Cardiac septum (tissue), 1 donor: ENCODE measurements at regions of chr16 and their contacts with region 1.

Region 1: GRCh38 chr16:54422569-54422978 is 136.0 kb upstream of the IRX3 start:
- DNase-seq: no peak

Region 2: DNA sequence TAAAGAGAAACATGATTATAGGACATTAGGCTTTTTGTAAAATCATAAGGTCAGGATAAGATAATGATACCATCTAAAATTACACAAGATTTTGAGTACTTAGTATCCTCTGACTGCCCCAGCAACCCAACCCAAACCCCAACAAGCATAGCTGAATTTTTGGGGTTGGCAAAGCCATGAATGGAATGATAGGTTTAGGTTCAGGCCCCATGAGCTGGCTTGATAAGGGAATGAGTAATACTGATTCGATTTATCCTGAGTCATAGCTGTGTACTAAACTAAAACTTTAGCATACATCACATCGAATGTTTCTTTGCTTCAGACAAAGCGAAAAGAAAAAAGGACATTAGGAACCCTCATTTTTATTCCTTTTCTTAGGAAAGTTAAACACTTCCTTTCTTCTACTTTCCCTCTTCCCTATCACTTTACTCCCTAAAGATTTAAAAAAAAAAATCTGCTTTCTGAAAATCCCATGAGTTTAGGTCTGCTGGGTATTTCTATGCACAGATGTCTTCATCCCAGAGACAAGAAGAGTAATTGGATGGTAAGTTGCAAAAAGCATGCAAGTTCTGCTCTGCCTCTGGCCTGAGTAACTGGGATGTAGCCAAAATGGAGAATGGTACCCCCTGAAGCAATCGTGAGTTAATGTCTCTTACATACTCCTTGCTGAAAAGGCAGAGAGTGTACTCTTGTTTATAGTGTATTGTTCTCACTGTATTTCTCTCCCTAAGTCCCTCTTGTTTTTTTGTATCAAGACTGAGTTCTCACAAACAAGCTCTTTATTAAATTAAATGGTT is 395.2 kb before region 1 on chr16:
- intact Hi-C with region 1: no loop called
- DNase-seq: no peak

Region 3: GRCh38 chr16:54489225-54490111 is 66.9 kb after region 1 on chr16:
- intact Hi-C with region 1: loop called (anchors 5 kb)
- DNase-seq: no peak

Region 4: GRCh38 chr16:54817446-54817845 is 394.9 kb after region 1 on chr16:
- intact Hi-C with region 1: loop called (anchors 10 kb)
- DNase-seq: no peak